ENCODE measurements at regions of chr1 and their contacts with region 1.

Region 1: DNA sequence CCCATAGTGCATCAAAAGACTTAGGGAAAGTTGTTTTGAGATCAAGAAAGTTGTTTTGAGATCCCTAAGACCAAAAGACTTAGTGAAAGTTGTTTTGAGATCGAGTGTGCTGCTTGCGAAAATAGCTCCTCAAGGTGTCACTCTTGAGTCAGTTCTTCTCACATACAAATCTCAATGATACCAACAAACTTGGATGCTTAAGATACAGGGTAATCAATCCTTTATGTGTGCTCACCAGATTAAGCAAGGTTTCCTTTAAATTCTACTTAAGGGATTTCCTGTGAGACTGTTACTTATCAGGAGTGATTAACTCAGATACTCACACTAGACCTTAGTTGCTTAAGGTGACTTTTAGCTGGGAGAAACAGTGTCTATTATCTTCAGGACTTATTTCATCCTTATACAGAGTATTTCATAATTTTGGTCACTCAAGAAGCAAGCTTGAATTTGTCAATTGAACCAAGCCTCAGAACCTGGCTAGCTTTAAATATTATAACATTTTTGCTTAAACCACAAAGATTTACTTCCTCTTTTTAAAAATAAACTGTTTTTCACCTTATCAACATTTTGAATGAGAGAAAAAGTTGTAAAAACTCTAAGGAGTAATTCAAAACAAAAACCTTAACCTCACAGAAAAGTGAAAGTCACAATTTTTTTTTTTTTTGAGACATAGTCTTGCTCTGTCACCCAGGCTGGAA is 8.0 kb upstream of the RLF start:
- DNase-seq: peak; percentile 71
- H3K4me3 ChIP-seq: peak overlapping the region; percentile 18
- H3K27ac ChIP-seq: no peak overlapping the region
- H3K4me1 ChIP-seq: peaks cover 5% of the 10 kb centered on the region
- H3K27me3 ChIP-seq: peaks cover 2% of the 10 kb centered on the region
- CTCF ChIP-seq: peak; percentile 81

Region 2: GRCh38 chr1:40438391-40439015 is 285.3 kb after region 1 on chr1:
- CTCF ChIA-PET with region 1: interaction called, 10 read pairs
- POLR2A ChIA-PET with region 1: no interaction called
- intact Hi-C with region 1: loop called (anchors 10 kb)
- DNase-seq: peak; percentile 56
- H3K4me3 ChIP-seq: no peak overlapping the region
- H3K27ac ChIP-seq: no peak overlapping the region
- H3K4me1 ChIP-seq: no peaks in the 10 kb centered on the region
- H3K27me3 ChIP-seq: no peaks in the 10 kb centered on the region
- CTCF ChIP-seq: peak; percentile 87